ENCODE measurements at regions of chr9 and their contacts with region 1.

Region 1: GRCh38 chr9:136644598-136645351 is 17.9 kb upstream of the EGFL7 start:
- DNase-seq: peak in 1 of 2 experiments; percentile 88
- ATAC-seq: peak; percentile 83 to 96
- H3K4me3 ChIP-seq: peak overlapping the region; percentile 32; the same call in 2 of the 3 replicates
- H3K27ac ChIP-seq: peak overlapping the region; percentile 63 to 84; a peak in 5 of 6 replicates
- H3K4me1 ChIP-seq: peaks cover 12% of the 10 kb centered on the region
- CTCF ChIP-seq: peak; percentile 67
- EP300 ChIP-seq: no peak
- POLR2A ChIP-seq: no peak
- RAD21 ChIP-seq: peak; percentile 87 to 88

Region 2: GRCh38 chr9:136502942-136503550 is 141.7 kb before region 1 on chr9:
- CTCF ChIA-PET with region 1: no interaction called
- POLR2A ChIA-PET with region 1: no interaction called
- DNase-seq: no peak
- ATAC-seq: peak in 1 of 2 experiments; percentile 25; a peak in 3 of 6 replicates
- H3K4me3 ChIP-seq: no peak overlapping the region
- H3K27ac ChIP-seq: no peak overlapping the region
- H3K4me1 ChIP-seq: peaks cover 5% of the 10 kb centered on the region; the same call in 1 of the 3 replicates
- CTCF ChIP-seq: no peak
- EP300 ChIP-seq: no peak
- POLR2A ChIP-seq: no peak
- RAD21 ChIP-seq: 0 out of 5 replicates have a peak, but pooled peaks of 1 of the 2 experiments have one; percentile 8

Region 3: GRCh38 chr9:136594492-136594891 is 50.3 kb before region 1 on chr9:
- CTCF ChIA-PET with region 1: no interaction called
- POLR2A ChIA-PET with region 1: no interaction called
- DNase-seq: no peak
- ATAC-seq: no peak
- H3K4me3 ChIP-seq: no peak overlapping the region
- H3K27ac ChIP-seq: no peak overlapping the region
- H3K4me1 ChIP-seq: peaks cover 20% of the 10 kb centered on the region
- CTCF ChIP-seq: no peak
- EP300 ChIP-seq: no peak
- POLR2A ChIP-seq: no peak
- RAD21 ChIP-seq: no peak

Region 4: DNA sequence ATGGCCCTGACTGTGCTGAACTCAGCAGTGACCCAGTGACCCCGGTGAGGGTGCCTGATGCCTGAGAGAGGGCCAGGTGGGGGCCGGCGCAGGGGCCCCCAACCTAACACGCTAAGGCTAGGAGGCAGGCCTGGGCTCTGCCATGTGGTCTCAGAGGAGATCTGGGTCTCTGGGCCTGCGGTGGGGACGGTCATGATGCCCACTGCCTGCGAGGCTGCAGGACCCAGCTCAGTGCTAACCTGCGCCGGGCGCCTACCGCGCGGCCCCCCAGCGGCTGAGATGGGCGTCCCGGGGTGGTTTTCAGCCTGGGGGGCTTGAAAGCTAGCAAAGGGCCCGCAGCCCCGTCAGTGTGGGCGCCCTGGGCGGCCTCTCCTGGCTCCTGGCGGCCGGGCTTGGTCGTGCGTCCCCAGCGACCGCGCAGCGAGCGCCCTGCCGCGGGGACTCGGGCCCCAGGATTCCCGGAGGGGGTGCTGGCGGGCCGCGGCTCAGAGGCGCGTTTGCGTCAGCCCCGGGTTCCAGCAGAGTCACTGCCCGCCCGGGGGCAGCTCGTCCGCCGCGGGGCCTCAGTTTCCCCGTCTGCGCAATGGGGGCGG is 20.4 kb after region 1 on chr9:
- CTCF ChIA-PET with region 1: interaction called, 15 read pairs
- POLR2A ChIA-PET with region 1: no interaction called
- DNase-seq: peak in 1 of 2 experiments; percentile 76
- ATAC-seq: peak; percentile 43 to 58; a peak in 5 of 6 replicates
- H3K4me3 ChIP-seq: peak overlapping the region; percentile 68
- H3K27ac ChIP-seq: peak overlapping the region; percentile 77 to 93
- H3K4me1 ChIP-seq: peaks cover 22% of the 10 kb centered on the region
- CTCF ChIP-seq: no peak
- EP300 ChIP-seq: no peak
- POLR2A ChIP-seq: no peak; the same call in 1 of the 2 replicates
- RAD21 ChIP-seq: no peak